ENCODE measurements at regions of chr6 and their contacts with region 1.

Region 1: GRCh38 chr6:165774903-165775601 is 112.0 kb upstream of the PDE10A start:
- DNase-seq: peak; percentile 99
- H3K4me3 ChIP-seq: peak overlapping the region in 1 of 3 experiments; percentile 5
- H3K27ac ChIP-seq: peak overlapping the region; percentile 92
- H3K4me1 ChIP-seq: peaks cover 12% of the 10 kb centered on the region
- H3K27me3 ChIP-seq: peaks cover 0 to 1% of the 10 kb centered on the region in 2 experiments
- CTCF ChIP-seq: no peak
- POLR2A ChIP-seq: no peak

Region 2: GRCh38 chr6:165556116-165556843 is 218.8 kb before region 1 on chr6:
- CTCF ChIA-PET with region 1: no interaction called
- POLR2A ChIA-PET with region 1: no interaction called
- dilution Hi-C with region 1: no loop called
- intact Hi-C with region 1: no loop called
- DNase-seq: peak; percentile 85
- H3K4me3 ChIP-seq: no peak overlapping the region
- H3K27ac ChIP-seq: no peak overlapping the region
- H3K4me1 ChIP-seq: peaks cover 7% of the 10 kb centered on the region
- H3K27me3 ChIP-seq: peaks cover 0 to 4% of the 10 kb centered on the region in 2 experiments
- CTCF ChIP-seq: no peak
- POLR2A ChIP-seq: no peak

Region 3: DNA sequence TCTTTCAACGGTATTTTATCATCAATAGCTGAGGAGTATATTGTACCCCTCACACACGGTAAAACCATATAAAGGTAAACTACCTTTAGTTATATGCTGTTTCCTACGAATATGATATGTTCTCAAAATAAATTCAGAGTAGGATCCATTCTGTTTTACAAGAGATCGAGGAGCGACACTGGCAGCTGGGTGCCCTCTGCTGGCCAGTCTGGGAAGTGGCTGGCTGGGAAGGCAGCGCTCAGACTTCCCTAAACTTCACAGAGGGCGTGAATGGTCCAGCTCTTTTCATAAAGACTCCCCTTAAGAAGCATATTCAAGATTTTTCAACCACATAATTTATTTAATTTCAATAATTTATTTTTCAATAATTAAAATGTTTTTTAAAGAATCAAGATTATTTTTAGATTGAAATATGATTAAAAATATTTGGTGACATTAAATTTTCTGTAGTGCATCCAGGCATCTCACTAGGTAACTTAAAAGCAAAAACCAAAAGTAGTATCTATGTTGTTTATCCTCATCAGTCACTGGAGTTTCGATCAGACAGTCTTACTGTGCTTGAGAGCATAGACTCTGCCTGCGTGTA is 75.5 kb after region 1 on chr6:
- CTCF ChIA-PET with region 1: interaction called, 10 read pairs
- POLR2A ChIA-PET with region 1: no interaction called
- dilution Hi-C with region 1: no loop called
- intact Hi-C with region 1: no loop called
- DNase-seq: peak; percentile 62
- H3K4me3 ChIP-seq: no peak overlapping the region
- H3K27ac ChIP-seq: no peak overlapping the region
- H3K4me1 ChIP-seq: no peaks in the 10 kb centered on the region
- H3K27me3 ChIP-seq: peaks cover 10 to 23% of the 10 kb centered on the region in 2 experiments
- CTCF ChIP-seq: peak; percentile 92 to 94
- POLR2A ChIP-seq: no peak